Posterior cingulate gyrus (tissue), 11 donors: ENCODE measurements at regions of chr3 and their contacts with region 1.

Region 1: DNA sequence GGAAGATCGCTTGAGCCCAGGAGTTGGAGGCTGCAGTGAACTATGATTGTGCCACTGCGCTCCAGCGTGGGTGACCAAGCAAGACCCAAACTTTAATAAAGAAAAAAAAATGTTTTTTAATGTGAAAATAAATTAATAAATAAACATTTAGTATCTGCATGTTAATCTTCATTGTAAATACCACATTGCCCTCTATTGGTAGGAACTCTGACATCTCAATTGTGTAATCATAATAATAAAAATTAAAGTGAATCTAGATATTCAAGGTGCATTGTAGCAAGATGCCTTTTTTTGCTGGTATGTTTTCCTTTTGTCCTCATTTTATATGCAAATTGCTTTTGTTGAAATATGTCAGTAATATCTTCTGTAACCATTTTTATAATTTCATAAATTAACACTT is 95.0 kb upstream of the LIMD1 start:
- DNase-seq: no peak

Region 2: DNA sequence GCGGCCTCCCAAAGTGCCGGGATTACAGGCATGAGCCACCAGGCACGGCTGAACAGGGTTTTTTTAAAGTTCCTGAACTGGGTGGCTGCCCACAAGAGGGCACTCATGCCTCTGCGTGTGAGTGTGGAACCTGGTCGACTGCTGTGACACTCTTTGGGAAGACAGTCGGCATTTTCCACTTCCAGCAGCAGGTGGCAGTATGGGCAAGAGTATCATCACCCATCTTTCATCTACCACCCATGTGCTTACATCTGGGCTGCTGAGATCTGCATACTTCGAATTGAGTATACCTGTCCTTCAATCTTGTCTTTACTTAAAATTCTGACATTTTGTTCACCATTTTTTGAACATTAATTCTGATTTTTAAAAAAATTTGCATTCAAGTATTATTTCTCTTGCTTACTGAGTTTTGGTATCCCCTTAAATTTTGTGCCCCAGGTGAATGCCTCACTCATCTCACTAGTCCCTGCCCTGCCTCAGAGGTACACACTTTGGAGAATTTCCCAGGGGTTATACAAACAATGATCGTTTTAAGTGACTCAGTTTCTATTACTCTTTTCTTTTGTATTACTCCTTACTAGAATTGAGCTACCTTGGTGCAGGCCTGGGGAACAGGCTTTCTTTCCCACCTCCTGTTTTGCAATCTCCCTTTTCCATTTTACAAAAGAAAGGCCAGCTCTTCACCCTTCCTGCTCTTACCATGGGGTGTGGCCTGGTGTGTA is 461.6 kb before region 1 on chr3:
- intact Hi-C with region 1: loop called (anchors 2 kb)
- DNase-seq: peak; percentile 81 to 98 (median 92)

Region 3: DNA sequence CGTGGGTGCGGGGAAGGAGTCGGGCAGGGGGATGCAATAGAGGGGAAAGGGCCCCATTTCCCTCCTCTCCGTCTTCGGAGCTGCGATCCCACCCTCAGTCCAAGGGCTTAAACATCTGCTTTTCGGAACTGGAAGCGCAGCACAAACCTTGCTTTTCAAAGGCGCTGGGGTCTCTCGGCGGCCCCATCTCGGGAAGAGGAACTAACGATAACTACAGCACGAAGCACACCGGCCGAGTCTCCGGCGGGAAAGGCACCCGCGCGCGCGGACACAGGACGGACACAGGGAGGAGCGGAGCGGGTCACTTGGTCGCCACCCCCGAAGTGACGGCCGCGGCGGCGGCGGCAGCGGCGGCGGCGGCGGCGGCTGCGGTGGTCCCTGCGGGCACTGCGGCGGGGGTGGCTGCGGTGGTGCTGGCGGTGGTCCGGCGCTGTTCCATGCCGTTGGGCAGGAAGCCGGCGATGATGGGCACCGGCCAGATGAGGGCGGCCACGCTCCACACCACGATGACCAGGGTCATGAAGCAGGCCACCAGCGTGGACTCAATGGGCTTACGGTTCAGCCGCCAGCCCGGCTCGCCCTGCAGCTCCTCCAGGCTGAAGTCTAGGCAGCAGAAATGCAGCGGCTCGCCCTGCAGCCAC is 274.6 kb before region 1 on chr3:
- intact Hi-C with region 1: loop called (anchors 2 kb)
- DNase-seq: peak; percentile 59 to 96 (median 74)